Activated T-helper 1 cell treated with anti-CD3 and anti-CD28 coated beads, Interleukin-12 subunit alpha, Interleukin-12 subunit beta, Interleukin-2, Interleukin-4 antibody, amounts not matched to agents 30 ng/mL and 10 ng/mL and 1 ng/mL, durations not matched to agents 14 hours and 24 hours and 36 hours (primary cell): ENCODE measurements at regions of chr9 and their contacts with region 1.

Region 1: DNA sequence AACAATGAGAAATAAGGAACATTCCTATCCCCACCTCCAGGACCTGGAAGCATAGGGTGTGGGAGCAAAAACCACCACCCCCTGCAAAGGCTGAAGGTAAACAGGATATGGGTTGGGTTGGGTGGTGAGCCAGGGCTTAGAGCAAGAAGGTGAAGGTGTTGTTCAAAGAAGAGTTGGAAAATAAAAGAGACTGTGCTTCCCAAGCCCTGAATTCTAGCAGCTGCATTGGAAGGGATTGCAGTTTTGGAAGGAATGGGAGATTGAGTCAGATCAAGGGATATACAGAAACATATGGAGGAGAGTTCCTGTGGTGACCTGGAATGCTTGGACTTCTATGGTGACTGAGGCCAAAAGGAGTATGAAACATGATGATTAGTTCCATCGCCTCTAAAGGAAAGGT is 24.7 kb upstream of the MTAP start:
- DNase-seq: no peak
- H3K4me3 Mint-ChIP-seq: no peak overlapping the region
- H3K27ac Mint-ChIP-seq: no peak overlapping the region
- H3K4me1 Mint-ChIP-seq: no peaks in the 10 kb centered on the region
- H3K27me3 Mint-ChIP-seq: peaks cover 11% of the 10 kb centered on the region

Region 2: GRCh38 chr9:21802195-21803000 is 24.7 kb after region 1 on chr9 and contains the start of gene MTAP:
- intact Hi-C with region 1: loop called (anchors 1 kb)
- DNase-seq: peak; percentile 61
- H3K4me3 Mint-ChIP-seq: peak within 1 kb of the TSS; percentile 100
- H3K27ac Mint-ChIP-seq: peak within 1 kb of the TSS; percentile 100
- H3K4me1 Mint-ChIP-seq: peaks cover 43% of the 10 kb centered on the region
- H3K27me3 Mint-ChIP-seq: peaks cover 48% of the 10 kb centered on the region
- total RNA-seq, gene MTAP: 55.5 and 62.2 TPM in 2 replicates

Region 3: GRCh38 chr9:22829236-22829635 is 1051.5 kb after region 1 on chr9:
- intact Hi-C with region 1: no loop called
- DNase-seq: no peak
- H3K4me3 Mint-ChIP-seq: no peak overlapping the region
- H3K27ac Mint-ChIP-seq: no peak overlapping the region
- H3K4me1 Mint-ChIP-seq: no peaks in the 10 kb centered on the region
- H3K27me3 Mint-ChIP-seq: no peaks in the 10 kb centered on the region